ENCODE measurements at regions of chr7 and their contacts with region 1.

Region 1: DNA sequence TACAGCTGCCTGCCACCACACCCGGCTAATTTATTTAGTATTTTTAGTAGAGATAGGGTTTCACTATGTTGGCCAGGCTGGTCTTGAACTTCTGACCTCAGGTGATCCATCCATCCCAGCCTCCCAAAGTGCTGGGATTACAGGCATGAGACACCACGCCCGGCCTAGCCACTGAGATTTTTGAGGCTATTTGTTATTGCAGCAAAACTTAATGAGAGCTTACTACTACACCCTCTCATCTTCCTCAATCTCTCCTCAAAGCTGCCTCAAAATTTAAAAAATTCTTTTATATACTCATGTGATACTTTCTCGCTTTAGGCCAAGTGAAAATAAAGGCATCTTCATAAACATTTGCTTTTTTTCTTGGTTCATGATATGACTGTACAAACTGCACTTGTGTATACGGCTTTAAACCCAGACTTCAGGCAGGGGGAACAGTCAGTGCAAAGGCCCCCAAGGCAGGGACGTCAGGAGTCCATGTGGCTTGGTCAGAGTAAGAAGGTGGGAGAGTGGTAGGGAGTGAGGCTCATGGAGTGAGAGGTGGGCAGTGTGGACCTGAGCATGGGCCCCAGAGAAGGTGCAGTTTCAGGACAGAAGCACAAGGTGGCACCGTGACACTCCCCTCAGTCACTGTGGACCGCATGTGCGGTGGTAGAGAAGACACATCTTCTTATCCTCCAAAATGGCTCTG is 55.5 kb downstream of the SYPL1 start:
- DNase-seq: peak; percentile 73 to 79
- H3K4me3 ChIP-seq: no peak overlapping the region
- H3K27ac ChIP-seq: no peak overlapping the region
- H3K4me1 ChIP-seq: no peaks in the 10 kb centered on the region
- H3K27me3 ChIP-seq: no peaks in the 10 kb centered on the region
- CTCF ChIP-seq: peak; percentile 80 to 94 (median 87)
- POLR2A ChIP-seq: no peak

Region 2: DNA sequence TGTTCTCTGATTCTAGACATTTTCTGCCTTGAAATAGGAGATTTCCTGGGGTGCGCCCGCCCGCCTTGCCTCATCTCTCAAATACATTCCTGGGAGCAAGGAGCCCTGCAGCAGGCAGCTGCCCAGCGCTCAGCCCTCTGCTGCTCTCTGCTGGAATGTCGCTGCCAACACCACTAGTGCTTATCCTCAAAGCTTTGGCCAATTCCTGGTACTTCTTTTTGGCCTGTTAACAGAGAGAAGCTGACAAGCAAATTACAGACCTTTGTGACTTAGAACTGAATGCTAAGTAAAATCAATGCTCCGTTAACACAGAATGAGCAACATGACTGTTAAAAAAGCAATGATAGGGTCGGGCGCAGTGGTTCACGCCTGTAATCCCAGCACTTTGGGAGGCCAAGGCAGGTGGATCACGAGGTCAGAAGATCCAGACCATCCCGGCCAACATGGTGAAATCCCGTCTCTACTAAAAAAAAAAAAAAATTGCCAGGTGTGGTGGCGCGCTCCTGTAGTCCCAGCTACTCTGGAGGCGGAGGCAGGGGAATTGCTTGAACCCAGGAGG is 97.3 kb after region 1 on chr7:
- intact Hi-C with region 1: loop called (anchors 2 kb)
- DNase-seq: peak; percentile 85 to 87
- H3K4me3 ChIP-seq: no peak overlapping the region
- H3K27ac ChIP-seq: peak overlapping the region in 1 of 2 donors; percentile 31
- H3K4me1 ChIP-seq: no peaks in the 10 kb centered on the region
- H3K27me3 ChIP-seq: no peaks in the 10 kb centered on the region
- CTCF ChIP-seq: peak; percentile 95 to 98 (median 97)
- POLR2A ChIP-seq: no peak